ENCODE measurements at regions of chrX and their contacts with region 1.

Region 1: GRCh38 chrX:72620550-72621145 is 48.0 kb upstream of the HDAC8 start:
- DNase-seq: peak; percentile 63 to 90
- H3K4me3 ChIP-seq: peak overlapping the region; percentile 14; the same call in 1 of the 2 replicates
- H3K27ac ChIP-seq: peak overlapping the region; percentile 82
- H3K4me1 ChIP-seq: peaks cover 34% of the 10 kb centered on the region
- H3K27me3 ChIP-seq: no peaks in the 10 kb centered on the region
- CTCF ChIP-seq: no peak

Region 2: DNA sequence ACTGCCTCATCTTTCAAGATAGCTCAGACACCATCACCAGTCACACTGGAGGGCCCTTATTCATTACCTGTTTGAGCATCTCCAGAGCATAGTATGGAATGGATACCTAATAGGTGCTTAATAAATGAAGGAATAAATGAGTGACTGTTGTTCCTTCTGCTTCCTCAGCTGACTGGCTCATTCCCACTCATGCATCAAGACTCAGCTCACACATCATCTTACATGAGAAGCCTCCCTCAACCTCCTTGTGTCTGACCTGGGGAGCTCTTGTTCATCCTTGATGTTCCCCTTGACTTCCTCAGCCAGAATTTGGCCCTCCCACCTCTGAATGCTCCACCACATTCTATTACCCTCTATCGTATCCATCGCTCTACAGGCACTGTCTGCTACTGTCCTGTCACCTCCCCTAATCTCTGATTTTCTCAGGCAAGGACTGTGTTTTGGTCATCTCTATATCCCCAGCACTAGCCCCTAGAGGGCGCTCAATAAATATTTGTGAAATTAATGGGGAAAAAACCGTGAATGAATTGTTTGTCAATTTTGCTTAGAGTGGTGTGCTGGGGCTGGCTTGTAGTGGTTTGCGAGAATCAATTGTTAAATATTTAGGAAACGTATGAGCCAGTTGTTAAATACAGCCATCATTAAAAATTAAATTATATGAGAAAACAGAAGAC is 621.7 kb before region 1 on chrX:
- CTCF ChIA-PET with region 1: no interaction called
- POLR2A ChIA-PET with region 1: no interaction called
- intact Hi-C with region 1: loop called (anchors 10 kb)
- DNase-seq: peak in 1 of 2 experiments; percentile 10
- H3K4me3 ChIP-seq: no peak overlapping the region
- H3K27ac ChIP-seq: no peak overlapping the region
- H3K4me1 ChIP-seq: no peaks in the 10 kb centered on the region
- H3K27me3 ChIP-seq: peaks cover 22% of the 10 kb centered on the region; the same call in 1 of the 2 replicates
- CTCF ChIP-seq: peak; percentile 75

Region 3: GRCh38 chrX:72297953-72298730 is 322.5 kb before region 1 on chrX:
- CTCF ChIA-PET with region 1: no interaction called
- POLR2A ChIA-PET with region 1: no interaction called
- intact Hi-C with region 1: no loop called
- DNase-seq: no peak
- H3K4me3 ChIP-seq: no peak overlapping the region
- H3K27ac ChIP-seq: no peak overlapping the region
- H3K4me1 ChIP-seq: no peaks in the 10 kb centered on the region
- H3K27me3 ChIP-seq: no peaks in the 10 kb centered on the region
- CTCF ChIP-seq: no peak; the same call in 1 of the 2 replicates

Region 4: DNA sequence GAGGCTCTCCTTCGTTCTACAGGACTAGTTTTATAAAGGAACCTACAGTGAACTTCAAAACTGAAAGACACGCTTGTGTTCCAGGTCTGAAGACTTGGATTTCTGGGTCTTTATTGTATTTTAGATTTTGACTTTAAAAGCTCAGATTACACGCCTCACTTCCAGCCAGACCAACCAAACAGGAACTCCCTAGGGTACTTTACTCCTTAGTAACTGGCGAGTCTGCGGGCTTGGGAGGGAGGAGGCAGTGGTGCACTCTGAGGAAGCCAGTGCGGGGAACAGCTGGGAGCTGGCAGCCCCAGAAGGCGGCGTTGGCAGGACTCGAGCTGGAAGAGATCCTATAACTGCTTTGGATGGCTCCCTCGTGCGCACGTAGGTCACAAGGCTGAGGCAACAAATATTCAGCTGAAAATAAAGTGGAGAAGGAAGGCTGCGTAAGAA is 93.8 kb after region 1 on chrX:
- CTCF ChIA-PET with region 1: no interaction called
- POLR2A ChIA-PET with region 1: no interaction called
- intact Hi-C with region 1: loop called (anchors 2 kb)
- DNase-seq: peak; percentile 64 to 71
- H3K4me3 ChIP-seq: peak overlapping the region; percentile 77
- H3K27ac ChIP-seq: peak overlapping the region; percentile 70
- H3K4me1 ChIP-seq: peaks cover 8% of the 10 kb centered on the region
- H3K27me3 ChIP-seq: no peaks in the 10 kb centered on the region
- CTCF ChIP-seq: no peak

Measured in PC-9 (cell line).